Esophagus squamous epithelium (tissue), 5 donors: ENCODE measurements at regions of chr4 and their contacts with region 1.

Region 1: GRCh38 chr4:78775303-78776030 is 683 bp upstream of the BMP2K start:
- DNase-seq: peak; percentile 43
- H3K4me3 ChIP-seq: peak overlapping the region; percentile 77 to 94 (median 86)
- H3K27ac ChIP-seq: peak overlapping the region; percentile 93 to 99 (median 98)
- H3K4me1 ChIP-seq: peaks cover 9 to 44% (median 19%) of the 10 kb centered on the region in 3 donors
- H3K27me3 ChIP-seq: no peaks in the 10 kb centered on the region
- CTCF ChIP-seq: no peak
- POLR2A ChIP-seq: peak in 1 of 4 donors; percentile 7

Region 2: GRCh38 chr4:78056265-78057129 is 719.0 kb before region 1 on chr4:
- intact Hi-C with region 1: no loop called
- DNase-seq: no peak
- H3K4me3 ChIP-seq: peak overlapping the region; percentile 53 to 77 (median 67)
- H3K27ac ChIP-seq: peak overlapping the region; percentile 16 to 88 (median 82)
- H3K4me1 ChIP-seq: peaks cover 21 to 45% (median 28%) of the 10 kb centered on the region in 3 donors
- H3K27me3 ChIP-seq: peaks cover 0 to 59% (median 0%) of the 10 kb centered on the region in 4 donors
- CTCF ChIP-seq: no peak
- POLR2A ChIP-seq: no peak

Region 3: GRCh38 chr4:78477276-78477675 is 298.2 kb before region 1 on chr4:
- intact Hi-C with region 1: no loop called
- DNase-seq: no peak
- H3K4me3 ChIP-seq: no peak overlapping the region
- H3K27ac ChIP-seq: no peak overlapping the region
- H3K4me1 ChIP-seq: no peaks in the 10 kb centered on the region
- H3K27me3 ChIP-seq: no peaks in the 10 kb centered on the region
- CTCF ChIP-seq: no peak
- POLR2A ChIP-seq: no peak

Region 4: DNA sequence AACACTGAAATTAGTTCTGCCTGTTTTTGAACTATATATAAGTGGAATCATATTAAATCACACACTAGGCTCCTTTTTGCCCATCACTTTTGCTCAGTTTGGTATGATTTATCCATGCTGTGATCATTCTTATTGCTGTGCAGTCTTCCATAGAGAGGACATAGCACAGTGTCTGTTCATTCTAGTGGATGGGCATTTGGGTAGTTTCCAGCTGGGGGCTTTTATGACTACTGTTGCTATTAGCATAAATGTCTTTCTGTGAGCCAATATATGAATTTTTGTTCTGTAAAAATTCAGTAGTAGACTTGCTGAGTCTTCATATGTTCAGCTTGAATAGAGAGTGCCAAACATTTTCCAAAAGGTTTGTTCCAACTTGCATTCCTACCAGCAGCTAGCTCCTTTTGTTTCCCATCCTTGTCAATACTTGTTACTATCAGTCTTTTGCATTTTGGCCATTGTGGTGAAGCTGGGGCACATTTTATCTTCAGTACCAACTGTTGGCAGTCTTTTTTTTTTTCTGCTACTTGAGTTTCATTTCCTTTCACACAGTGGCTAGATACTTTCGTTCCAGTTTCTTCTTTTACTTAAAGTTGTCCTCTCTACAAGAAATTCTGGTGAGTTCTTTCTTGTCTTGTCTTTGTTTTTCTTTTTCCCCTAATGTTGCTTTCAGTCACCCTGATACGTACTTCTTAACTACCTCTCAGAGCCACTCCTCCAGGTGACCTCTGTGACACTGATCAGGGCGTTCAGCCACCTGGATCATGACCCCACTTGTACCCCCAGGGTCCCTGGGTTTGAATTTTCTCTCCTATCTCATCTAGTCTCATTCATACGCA is 136.9 kb before region 1 on chr4:
- intact Hi-C with region 1: no loop called
- DNase-seq: no peak
- H3K4me3 ChIP-seq: no peak overlapping the region
- H3K27ac ChIP-seq: peak overlapping the region; percentile 47 to 67 (median 58)
- H3K4me1 ChIP-seq: peaks cover 0 to 34% (median 0%) of the 10 kb centered on the region in 3 donors
- H3K27me3 ChIP-seq: no peaks in the 10 kb centered on the region
- CTCF ChIP-seq: no peak
- POLR2A ChIP-seq: no peak

Region 5: DNA sequence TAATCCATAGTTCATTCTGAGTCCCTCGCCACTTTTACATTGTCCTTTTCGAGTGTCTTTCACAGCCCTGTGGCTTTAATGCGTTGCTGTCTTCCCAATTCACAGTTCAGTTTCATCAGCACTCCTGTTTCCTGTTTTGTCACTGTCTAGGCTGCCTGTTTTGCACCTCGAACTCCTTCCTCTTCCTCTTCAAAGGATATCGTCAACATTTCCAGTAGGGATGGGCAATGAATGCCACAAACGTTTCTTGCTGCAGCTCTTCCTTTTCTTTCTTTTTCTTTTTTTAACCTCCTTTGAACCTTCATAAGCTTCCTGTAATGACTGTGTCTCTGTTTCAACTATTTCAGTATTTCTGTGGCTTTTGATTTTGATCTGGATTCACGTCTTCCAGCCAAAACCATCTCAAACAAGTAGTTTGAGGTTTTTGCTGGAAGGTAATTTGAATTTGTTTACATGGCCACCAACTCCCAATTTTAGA is 118.5 kb before region 1 on chr4:
- intact Hi-C with region 1: loop called (anchors 10 kb)
- DNase-seq: no peak
- H3K4me3 ChIP-seq: no peak overlapping the region
- H3K27ac ChIP-seq: peak overlapping the region in 3 of 4 donors; percentile 9 to 30 (median 17)
- H3K4me1 ChIP-seq: peaks cover 0 to 46% (median 13%) of the 10 kb centered on the region in 3 donors
- H3K27me3 ChIP-seq: no peaks in the 10 kb centered on the region
- CTCF ChIP-seq: no peak
- POLR2A ChIP-seq: no peak

Region 6: DNA sequence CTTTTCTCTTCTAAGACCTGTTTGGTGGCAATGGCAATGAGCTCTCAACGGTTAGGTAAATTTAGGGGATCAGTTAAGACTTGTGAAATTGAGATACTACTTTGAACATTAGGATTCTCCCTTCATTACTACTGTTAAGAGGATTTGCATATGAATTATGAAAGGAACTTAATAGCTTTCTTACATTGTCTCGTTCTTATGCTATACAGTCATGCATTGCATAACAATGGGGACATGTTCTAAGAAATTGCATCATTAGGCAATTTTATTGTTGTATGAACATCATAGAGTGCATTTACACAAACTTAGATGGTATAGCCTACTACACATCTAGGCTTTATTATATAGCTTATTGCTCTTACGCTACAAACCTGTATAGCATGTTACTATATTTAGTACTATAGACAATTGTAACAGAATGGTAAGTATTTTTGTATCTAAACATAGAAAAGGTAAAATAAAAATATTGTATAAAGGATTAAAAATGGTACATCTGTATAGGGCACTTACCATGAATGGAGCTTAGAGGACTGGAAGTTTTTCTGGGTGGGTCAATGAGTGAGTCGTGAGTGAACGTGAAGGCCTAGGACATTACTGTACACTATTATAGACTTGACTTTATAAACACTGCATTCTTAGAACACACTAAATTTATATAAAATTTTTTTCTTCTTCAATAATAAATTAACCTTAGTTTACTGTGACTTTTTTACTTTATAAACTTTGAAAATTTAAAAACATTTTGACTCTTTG is 101.3 kb after region 1 on chr4:
- intact Hi-C with region 1: no loop called
- DNase-seq: no peak
- H3K4me3 ChIP-seq: no peak overlapping the region
- H3K27ac ChIP-seq: no peak overlapping the region
- H3K4me1 ChIP-seq: no peaks in the 10 kb centered on the region
- H3K27me3 ChIP-seq: no peaks in the 10 kb centered on the region
- CTCF ChIP-seq: no peak
- POLR2A ChIP-seq: no peak